Ascending aorta (tissue), 2 donors: ENCODE measurements at regions of chr6 and their contacts with region 1.

Region 1: DNA sequence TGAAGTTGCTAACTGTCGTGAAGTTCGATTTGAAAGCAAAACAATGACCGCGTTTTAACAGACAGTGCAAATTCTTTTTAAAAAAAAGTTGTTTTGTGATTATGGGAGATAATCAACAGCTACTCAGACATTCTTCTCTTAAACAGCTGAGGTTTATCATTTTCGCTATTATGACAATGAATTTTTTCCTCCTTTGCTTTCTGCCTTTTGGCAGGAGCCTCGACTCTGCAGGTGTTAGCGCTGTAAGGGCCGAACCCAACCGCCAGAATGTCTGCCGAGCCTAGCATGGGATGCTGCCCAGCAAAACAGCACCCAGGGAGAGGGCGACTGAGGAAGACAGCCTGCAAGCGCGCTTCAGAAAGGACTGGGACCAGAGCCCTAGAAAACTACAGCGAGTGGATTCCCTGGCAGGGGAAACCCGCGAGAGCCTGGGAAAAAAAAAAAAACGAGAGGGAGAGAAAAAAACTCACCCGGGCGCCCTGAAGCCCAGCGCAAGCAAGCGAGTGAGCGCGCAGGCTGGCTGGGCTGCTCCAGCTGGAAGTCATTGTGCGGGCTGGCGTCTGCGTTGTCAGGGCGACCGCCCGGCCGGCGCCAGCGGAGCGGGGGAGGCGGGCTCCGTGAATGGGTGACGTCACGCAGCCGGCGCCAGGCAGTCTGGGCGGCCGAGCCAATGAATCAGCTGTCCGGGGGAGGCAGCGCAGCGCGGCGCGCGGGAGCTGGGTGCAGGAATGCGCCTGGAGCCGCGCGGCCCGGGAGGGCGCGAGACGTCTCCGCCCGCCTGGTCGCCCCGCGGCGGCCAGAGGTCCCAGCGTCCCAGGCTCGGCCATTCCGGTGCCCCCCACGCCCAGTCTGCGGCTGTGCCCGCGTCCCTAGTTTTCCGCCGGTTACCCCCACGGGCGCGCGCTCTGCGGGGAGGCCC is 32.7 kb upstream of the ID4 start:
- DNase-seq: peak; percentile 80 to 98
- H3K4me3 ChIP-seq: peak overlapping the region; percentile 48 to 76
- H3K27ac ChIP-seq: peak overlapping the region; percentile 98 to 99
- H3K4me1 ChIP-seq: peaks cover 0 to 17% of the 10 kb centered on the region in 2 donors
- H3K27me3 ChIP-seq: no peaks in the 10 kb centered on the region
- CTCF ChIP-seq: no peak

Region 2: DNA sequence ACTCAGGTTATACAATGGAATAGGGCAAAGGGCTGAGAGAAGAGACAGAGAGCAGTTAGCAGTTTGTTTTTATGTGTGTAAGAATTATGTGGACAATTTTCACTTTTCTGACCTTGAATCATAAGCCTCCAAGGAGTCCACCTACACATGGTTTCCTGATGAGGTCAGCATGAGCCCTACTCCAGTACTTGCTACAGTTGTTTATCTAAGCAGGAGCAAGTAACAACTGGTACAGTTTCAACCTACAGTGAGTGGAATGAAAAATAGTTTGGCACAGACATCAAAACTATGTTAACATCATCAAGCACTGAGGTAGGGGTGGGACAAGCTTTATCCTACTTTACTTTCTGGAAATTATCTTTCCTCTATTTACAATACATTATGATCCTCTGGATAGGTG is 394.0 kb before region 1 on chr6:
- intact Hi-C with region 1: loop called (anchors 10 kb)
- DNase-seq: no peak
- H3K4me3 ChIP-seq: no peak overlapping the region
- H3K27ac ChIP-seq: no peak overlapping the region
- H3K4me1 ChIP-seq: peaks cover 0 to 5% of the 10 kb centered on the region in 2 donors
- H3K27me3 ChIP-seq: no peaks in the 10 kb centered on the region
- CTCF ChIP-seq: no peak

Region 3: GRCh38 chr6:19538077-19538512 is 266.4 kb before region 1 on chr6:
- intact Hi-C with region 1: loop called (anchors 2 kb)
- DNase-seq: no peak
- H3K4me3 ChIP-seq: no peak overlapping the region
- H3K27ac ChIP-seq: no peak overlapping the region
- H3K4me1 ChIP-seq: peaks cover 0 to 4% of the 10 kb centered on the region in 2 donors
- H3K27me3 ChIP-seq: no peaks in the 10 kb centered on the region
- CTCF ChIP-seq: no peak

Region 4: DNA sequence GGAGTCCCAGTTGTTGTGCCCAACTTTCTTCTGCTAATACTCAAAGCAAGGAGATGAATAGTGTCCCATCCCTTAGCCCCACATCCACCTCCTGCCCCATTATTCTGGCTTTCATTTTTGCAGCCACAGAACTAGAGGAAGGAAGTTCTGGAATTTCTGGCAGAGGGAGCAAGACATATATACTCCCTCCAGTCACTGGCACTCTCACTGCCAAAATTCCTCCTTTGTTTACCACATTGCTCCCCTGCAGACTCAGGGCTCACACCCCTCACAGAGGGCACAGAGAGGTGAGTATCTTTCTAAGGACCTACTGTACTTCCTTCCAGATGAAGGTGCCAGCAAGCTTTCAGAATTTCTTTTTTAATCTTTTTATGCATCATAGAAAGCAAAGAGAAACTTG is 135.3 kb before region 1 on chr6:
- intact Hi-C with region 1: loop called (anchors 10 kb)
- DNase-seq: no peak
- H3K4me3 ChIP-seq: no peak overlapping the region
- H3K27ac ChIP-seq: peak overlapping the region; percentile 75 to 83
- H3K4me1 ChIP-seq: peaks cover 0 to 30% of the 10 kb centered on the region in 2 donors
- H3K27me3 ChIP-seq: no peaks in the 10 kb centered on the region
- CTCF ChIP-seq: no peak

Region 5: DNA sequence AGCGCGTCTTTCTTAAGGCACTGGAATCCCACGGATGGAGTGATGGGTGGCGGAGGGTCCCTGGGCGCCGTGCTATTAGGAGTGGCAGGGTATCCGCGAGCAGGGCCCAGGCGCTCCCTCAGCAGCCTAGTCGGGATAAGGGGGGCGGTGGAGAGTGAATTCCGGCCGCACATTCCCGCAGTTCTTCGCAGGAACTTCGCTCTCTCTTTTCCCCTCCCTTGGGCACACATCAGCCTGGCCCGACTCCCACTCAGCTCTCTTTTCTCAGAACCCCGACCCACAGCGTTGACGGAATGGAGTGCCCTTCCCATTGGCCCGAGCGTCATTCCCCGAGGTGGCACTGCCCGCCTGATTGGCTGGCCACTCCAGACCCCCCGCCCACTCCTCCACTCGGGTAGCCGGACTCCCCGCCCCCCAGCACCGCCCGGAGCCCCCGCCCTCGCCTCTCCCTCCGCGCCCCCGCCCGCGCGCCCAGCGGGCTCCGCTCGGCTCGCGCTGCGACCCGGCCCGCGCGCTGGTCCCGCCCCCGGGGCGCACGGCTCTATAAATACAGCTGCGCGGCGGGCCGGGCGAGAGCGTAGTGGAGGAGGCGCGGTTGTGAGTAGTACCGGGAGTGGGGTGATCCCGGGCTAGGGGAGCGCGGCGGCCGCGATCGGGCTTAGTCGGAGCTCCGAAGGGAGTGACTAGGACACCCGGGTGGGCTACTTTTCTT is 32.5 kb after region 1 on chr6 and contains the start of gene ID4:
- intact Hi-C with region 1: loop called (anchors 1 kb)
- DNase-seq: peak; percentile 82 to 98
- H3K4me3 ChIP-seq: peak within 1 kb of the TSS; percentile 63 to 95
- H3K27ac ChIP-seq: peak within 1 kb of the TSS; percentile 96
- H3K4me1 ChIP-seq: peaks cover 0 to 3% of the 10 kb centered on the region in 2 donors
- H3K27me3 ChIP-seq: no peaks in the 10 kb centered on the region
- CTCF ChIP-seq: no peak
- total RNA-seq, gene ID4: 103 TPM